Endothelial cell of umbilical vein (primary cell): ENCODE measurements at regions of chr2 and their contacts with region 1.

Region 1: GRCh38 chr2:19746611-19747309 is 155.0 kb downstream of the TTC32 start:
- DNase-seq: peak; percentile 29
- H3K4me3 ChIP-seq: no peak overlapping the region
- H3K27ac ChIP-seq: no peak overlapping the region
- H3K4me1 ChIP-seq: no peaks in the 10 kb centered on the region
- H3K27me3 ChIP-seq: no peaks in the 10 kb centered on the region
- CTCF ChIP-seq: peak; percentile 15 to 54
- POLR2A ChIP-seq: no peak

Region 2: DNA sequence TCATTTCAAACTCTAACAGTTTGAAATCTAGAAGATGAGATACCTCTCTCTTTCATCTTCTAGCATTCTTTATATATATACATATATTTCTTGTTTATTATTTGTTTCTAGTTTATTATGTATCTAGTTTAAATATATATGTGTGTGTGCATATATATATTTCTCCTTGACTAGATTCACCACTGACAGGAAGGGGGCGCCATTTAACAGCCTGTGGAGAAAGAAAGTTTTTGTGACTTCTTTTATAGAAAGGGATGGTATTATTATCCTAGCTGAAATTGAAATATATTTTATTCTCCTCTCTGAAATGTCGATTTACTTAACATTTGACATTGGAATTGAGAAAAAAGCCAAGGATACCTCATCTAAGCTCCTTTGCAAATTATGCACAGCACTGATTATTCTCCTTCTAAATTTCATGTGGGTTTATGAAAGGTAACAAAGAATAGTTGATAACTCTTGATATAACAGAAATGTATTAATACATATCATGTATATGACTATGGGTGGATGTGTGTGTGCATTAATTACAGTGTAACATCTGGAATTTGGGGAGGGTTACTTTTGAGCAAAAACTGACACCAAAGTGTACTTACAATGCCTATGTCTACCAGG is 996.7 kb before region 1 on chr2:
- CTCF ChIA-PET with region 1: no interaction called
- POLR2A ChIA-PET with region 1: no interaction called
- dilution Hi-C with region 1: no loop called
- intact Hi-C with region 1: loop called (anchors 1 kb)
- DNase-seq: peak; percentile 42
- H3K4me3 ChIP-seq: no peak overlapping the region
- H3K27ac ChIP-seq: no peak overlapping the region
- H3K4me1 ChIP-seq: no peaks in the 10 kb centered on the region
- H3K27me3 ChIP-seq: no peaks in the 10 kb centered on the region
- CTCF ChIP-seq: peak; percentile 44 to 52
- POLR2A ChIP-seq: no peak

Region 3: DNA sequence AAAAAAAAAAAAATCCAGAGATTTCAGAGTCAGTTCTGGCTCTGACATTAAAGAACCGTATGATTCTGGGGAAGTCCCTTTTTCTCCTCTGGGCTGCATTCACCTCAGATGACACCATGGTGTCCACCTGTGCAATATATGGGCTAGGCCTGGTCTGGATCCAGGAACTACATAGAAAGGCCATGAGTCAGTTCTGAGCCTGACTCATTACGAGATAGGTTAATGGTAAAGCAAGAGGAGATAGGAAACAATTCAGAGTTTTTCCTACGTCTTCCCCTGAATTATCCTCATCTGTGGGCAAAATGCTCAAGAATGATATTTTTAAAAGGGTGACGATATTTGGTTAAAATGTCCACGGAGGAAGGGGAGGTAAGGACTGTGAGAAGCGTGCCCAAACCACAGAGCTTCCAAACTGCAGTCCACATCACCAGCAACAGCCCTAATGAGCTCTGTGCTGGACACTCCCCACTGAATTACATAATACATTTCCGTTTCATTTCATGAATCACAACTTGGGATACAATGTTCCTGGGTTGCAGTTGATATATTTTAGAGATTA is 208.3 kb before region 1 on chr2:
- CTCF ChIA-PET with region 1: no interaction called
- POLR2A ChIA-PET with region 1: no interaction called
- dilution Hi-C with region 1: no loop called
- intact Hi-C with region 1: no loop called
- DNase-seq: peak; percentile 35
- H3K4me3 ChIP-seq: no peak overlapping the region
- H3K27ac ChIP-seq: no peak overlapping the region
- H3K4me1 ChIP-seq: no peaks in the 10 kb centered on the region
- H3K27me3 ChIP-seq: no peaks in the 10 kb centered on the region
- CTCF ChIP-seq: no peak
- POLR2A ChIP-seq: no peak

Region 4: GRCh38 chr2:19574778-19575260 is 171.9 kb before region 1 on chr2:
- CTCF ChIA-PET with region 1: no interaction called
- POLR2A ChIA-PET with region 1: no interaction called
- dilution Hi-C with region 1: no loop called
- intact Hi-C with region 1: loop called (anchors 10 kb)
- DNase-seq: peak; percentile 46
- H3K4me3 ChIP-seq: no peak overlapping the region
- H3K27ac ChIP-seq: no peak overlapping the region
- H3K4me1 ChIP-seq: peaks cover 6% of the 10 kb centered on the region
- H3K27me3 ChIP-seq: no peaks in the 10 kb centered on the region
- CTCF ChIP-seq: no peak
- POLR2A ChIP-seq: no peak

Region 5: GRCh38 chr2:19711470-19712372 is 35.0 kb before region 1 on chr2:
- CTCF ChIA-PET with region 1: no interaction called
- POLR2A ChIA-PET with region 1: no interaction called
- dilution Hi-C with region 1: no loop called
- intact Hi-C with region 1: loop called (anchors 1 kb)
- DNase-seq: peak; percentile 96
- H3K4me3 ChIP-seq: no peak overlapping the region
- H3K27ac ChIP-seq: peak overlapping the region; percentile 72
- H3K4me1 ChIP-seq: peaks cover 35% of the 10 kb centered on the region
- H3K27me3 ChIP-seq: no peaks in the 10 kb centered on the region
- CTCF ChIP-seq: no peak
- POLR2A ChIP-seq: no peak

Region 6: DNA sequence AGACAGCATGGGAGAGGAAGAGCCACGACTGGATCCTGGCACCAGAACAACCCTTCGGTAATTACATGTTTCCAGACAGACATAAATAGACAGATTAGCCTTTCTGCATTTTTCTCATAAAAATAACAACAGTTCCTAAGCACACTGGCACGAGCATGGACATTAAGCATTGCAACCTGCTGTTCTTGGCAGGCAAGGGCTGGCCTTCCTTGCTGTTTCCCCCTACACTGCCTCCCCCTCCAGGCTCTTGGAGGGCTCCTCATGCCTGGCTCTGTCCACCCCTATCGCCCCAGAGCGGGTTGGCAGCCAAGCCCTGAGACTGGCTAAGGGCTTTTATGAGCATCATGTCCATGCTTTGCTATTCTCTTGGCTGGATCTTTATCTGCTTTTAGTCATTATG is 65.4 kb after region 1 on chr2:
- CTCF ChIA-PET with region 1: no interaction called
- POLR2A ChIA-PET with region 1: no interaction called
- dilution Hi-C with region 1: no loop called
- intact Hi-C with region 1: no loop called
- DNase-seq: no peak
- H3K4me3 ChIP-seq: no peak overlapping the region
- H3K27ac ChIP-seq: no peak overlapping the region
- H3K4me1 ChIP-seq: no peaks in the 10 kb centered on the region
- H3K27me3 ChIP-seq: peaks cover 0 to 3% of the 10 kb centered on the region in 2 experiments
- CTCF ChIP-seq: no peak
- POLR2A ChIP-seq: no peak